ENCODE measurements at regions of chr17 and their contacts with region 1.

Region 1: GRCh38 chr17:4920351-4921048 is 11.6 kb upstream of the GP1BA start:
- DNase-seq: no peak
- ATAC-seq: no peak
- H3K4me3 ChIP-seq: no peak overlapping the region
- H3K4me3 Mint-ChIP-seq: no peak overlapping the region
- H3K27ac ChIP-seq: no peak overlapping the region
- H3K27ac Mint-ChIP-seq: no peak overlapping the region
- H3K4me1 ChIP-seq: no peaks in the 10 kb centered on the region
- H3K4me1 Mint-ChIP-seq: no peaks in the 10 kb centered on the region
- H3K27me3 ChIP-seq: no peaks in the 10 kb centered on the region
- H3K27me3 Mint-ChIP-seq: no peaks in the 10 kb centered on the region
- CTCF ChIP-seq: no peak

Region 2: DNA sequence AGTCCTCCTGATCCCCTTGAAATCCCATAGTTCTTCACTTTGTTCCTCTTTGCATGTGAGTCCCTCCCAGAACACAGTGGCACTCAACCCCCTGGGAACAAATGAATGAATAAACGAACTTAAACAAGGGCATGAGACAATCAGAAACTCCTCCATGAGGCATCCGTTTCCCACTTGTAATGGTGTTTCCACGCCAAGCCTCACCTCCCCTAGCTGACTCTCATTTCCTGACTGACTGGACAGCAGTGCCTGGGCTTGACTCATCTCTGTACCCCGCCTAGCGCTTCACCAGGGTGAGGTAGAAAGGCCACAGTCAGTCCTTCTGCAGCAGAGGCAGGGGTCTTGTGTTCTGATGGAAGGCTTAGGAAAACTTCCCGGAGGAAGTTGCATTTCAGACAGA is 91.4 kb after region 1 on chr17:
- CTCF ChIA-PET with region 1: no interaction called
- POLR2A ChIA-PET with region 1: interaction called, 10 read pairs
- intact Hi-C with region 1: no loop called
- DNase-seq: no peak
- ATAC-seq: no peak
- H3K4me3 ChIP-seq: no peak overlapping the region
- H3K4me3 Mint-ChIP-seq: no peak overlapping the region
- H3K27ac ChIP-seq: no peak overlapping the region
- H3K27ac Mint-ChIP-seq: no peak overlapping the region
- H3K4me1 ChIP-seq: peaks cover 6 to 8% of the 10 kb centered on the region in 2 donors
- H3K4me1 Mint-ChIP-seq: peaks cover 5% of the 10 kb centered on the region
- H3K27me3 ChIP-seq: peaks cover 0 to 57% (median 4%) of the 10 kb centered on the region in 4 experiments
- H3K27me3 Mint-ChIP-seq: no peaks in the 10 kb centered on the region
- CTCF ChIP-seq: no peak

Region 3: DNA sequence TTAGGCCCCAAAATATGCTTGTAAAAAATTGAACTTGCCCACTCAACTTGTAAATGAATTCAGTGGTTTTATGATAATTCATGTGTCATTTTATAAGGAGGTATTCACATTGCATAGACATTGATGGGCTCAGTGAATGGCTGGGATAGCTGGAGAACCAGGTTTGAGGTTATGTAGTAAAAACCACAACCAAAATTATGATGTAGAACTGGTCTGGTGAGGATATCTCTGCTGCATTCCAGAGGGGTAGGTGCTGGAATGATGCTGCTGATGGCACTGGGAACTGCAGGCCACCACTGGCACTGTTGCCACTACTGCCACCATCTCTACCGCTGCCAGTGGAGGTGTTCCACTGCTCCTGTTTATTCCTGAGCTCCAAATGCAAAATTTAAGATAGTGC is 340.1 kb after region 1 on chr17:
- CTCF ChIA-PET with region 1: no interaction called
- POLR2A ChIA-PET with region 1: no interaction called
- intact Hi-C with region 1: no loop called
- DNase-seq: no peak
- ATAC-seq: no peak
- H3K4me3 ChIP-seq: no peak overlapping the region
- H3K4me3 Mint-ChIP-seq: no peak overlapping the region
- H3K27ac ChIP-seq: no peak overlapping the region
- H3K27ac Mint-ChIP-seq: no peak overlapping the region
- H3K4me1 ChIP-seq: peaks cover 17 to 25% of the 10 kb centered on the region in 2 donors
- H3K4me1 Mint-ChIP-seq: peaks cover 32% of the 10 kb centered on the region
- H3K27me3 ChIP-seq: no peaks in the 10 kb centered on the region
- H3K27me3 Mint-ChIP-seq: no peaks in the 10 kb centered on the region
- CTCF ChIP-seq: no peak

Measured in B cell (primary cell).